Activated T-helper 1 cell treated with anti-CD3 and anti-CD28 coated beads, Interleukin-12 subunit alpha, Interleukin-12 subunit beta, Interleukin-2, Interleukin-4 antibody, amounts not matched to agents 30 ng/mL and 10 ng/mL and 1 ng/mL, durations not matched to agents 14 hours and 24 hours and 36 hours (primary cell): ENCODE measurements at regions of chr3 and their contacts with region 1.

Region 1: GRCh38 chr3:122101646-122102045 is 46.5 kb downstream of the CD86 start:
- DNase-seq: no peak
- H3K4me3 Mint-ChIP-seq: peak overlapping the region; percentile 47
- H3K27ac Mint-ChIP-seq: peak overlapping the region; percentile 87
- H3K4me1 Mint-ChIP-seq: no peaks in the 10 kb centered on the region
- H3K27me3 Mint-ChIP-seq: no peaks in the 10 kb centered on the region

Region 2: GRCh38 chr3:121660356-121661171 is 441.1 kb before region 1 on chr3 and contains the start of gene HCLS1:
- intact Hi-C with region 1: loop called (anchors 1 kb)
- DNase-seq: peak; percentile 73
- H3K4me3 Mint-ChIP-seq: peak within 1 kb of the TSS; percentile 95
- H3K27ac Mint-ChIP-seq: peak within 1 kb of the TSS; percentile 99
- H3K4me1 Mint-ChIP-seq: peaks cover 57% of the 10 kb centered on the region
- H3K27me3 Mint-ChIP-seq: no peaks in the 10 kb centered on the region
- total RNA-seq, gene HCLS1: 234 and 235 TPM in 2 replicates

Region 3: DNA sequence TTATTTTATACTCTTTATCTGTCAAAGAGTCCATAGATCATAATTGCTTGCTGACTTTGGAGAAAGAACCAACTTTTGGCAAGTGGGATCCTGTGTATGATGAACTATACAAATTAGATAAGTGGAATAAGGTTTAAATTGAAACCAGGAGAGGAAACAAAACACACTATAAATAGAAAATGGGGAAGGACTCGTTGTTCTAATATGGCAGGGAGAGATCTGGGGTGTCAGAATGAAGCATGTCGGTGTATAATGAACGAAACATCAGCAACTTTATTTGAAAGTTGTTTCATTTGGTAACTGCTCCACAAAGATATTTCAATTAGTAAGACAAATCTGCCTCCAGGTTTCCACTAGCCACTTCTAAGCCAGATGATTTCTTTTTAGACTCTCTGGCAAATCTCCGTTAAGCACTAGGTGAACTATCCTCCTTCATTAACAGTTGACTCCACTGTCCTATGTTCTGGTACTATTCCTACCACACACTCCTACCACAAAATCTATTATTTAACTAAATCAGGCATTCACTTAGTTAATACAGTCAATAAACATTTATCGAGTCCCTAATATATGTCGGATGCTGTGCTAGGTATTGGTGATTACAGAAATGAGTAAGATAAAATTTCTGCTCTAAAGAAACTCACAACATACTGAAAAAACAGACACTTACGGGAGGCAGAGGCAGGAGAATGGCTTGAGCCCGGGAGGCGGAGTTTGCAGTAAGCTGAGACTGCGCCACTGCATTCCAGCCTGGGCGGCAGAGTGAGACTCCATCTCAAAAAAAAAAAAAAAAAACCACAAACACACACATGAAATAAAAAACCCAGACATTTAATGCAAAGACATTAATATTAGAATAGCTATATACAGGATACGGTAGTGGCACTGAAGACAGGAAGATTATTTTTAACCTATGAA is 187.3 kb before region 1 on chr3:
- intact Hi-C with region 1: loop called (anchors 1 kb)
- DNase-seq: no peak
- H3K4me3 Mint-ChIP-seq: no peak overlapping the region
- H3K27ac Mint-ChIP-seq: no peak overlapping the region
- H3K4me1 Mint-ChIP-seq: peaks cover 13% of the 10 kb centered on the region
- H3K27me3 Mint-ChIP-seq: no peaks in the 10 kb centered on the region

Region 4: GRCh38 chr3:122067214-122067550 is 34.5 kb before region 1 on chr3:
- intact Hi-C with region 1: loop called (anchors 5 kb)
- DNase-seq: no peak
- H3K4me3 Mint-ChIP-seq: peak overlapping the region; percentile 1
- H3K27ac Mint-ChIP-seq: peak overlapping the region; percentile 53
- H3K4me1 Mint-ChIP-seq: peaks cover 13% of the 10 kb centered on the region
- H3K27me3 Mint-ChIP-seq: peaks cover 5% of the 10 kb centered on the region

Region 5: GRCh38 chr3:122183521-122183892 is 81.9 kb after region 1 on chr3 and contains the start of gene CASR:
- intact Hi-C with region 1: no loop called
- DNase-seq: no peak
- H3K4me3 Mint-ChIP-seq: peak within 1 kb of the TSS; percentile 52
- H3K27ac Mint-ChIP-seq: no peak within 1 kb of the TSS
- H3K4me1 Mint-ChIP-seq: peaks cover 8% of the 10 kb centered on the region
- H3K27me3 Mint-ChIP-seq: peaks cover 63% of the 10 kb centered on the region
- total RNA-seq, gene CASR: not detected in 2 replicates

Region 6: DNA sequence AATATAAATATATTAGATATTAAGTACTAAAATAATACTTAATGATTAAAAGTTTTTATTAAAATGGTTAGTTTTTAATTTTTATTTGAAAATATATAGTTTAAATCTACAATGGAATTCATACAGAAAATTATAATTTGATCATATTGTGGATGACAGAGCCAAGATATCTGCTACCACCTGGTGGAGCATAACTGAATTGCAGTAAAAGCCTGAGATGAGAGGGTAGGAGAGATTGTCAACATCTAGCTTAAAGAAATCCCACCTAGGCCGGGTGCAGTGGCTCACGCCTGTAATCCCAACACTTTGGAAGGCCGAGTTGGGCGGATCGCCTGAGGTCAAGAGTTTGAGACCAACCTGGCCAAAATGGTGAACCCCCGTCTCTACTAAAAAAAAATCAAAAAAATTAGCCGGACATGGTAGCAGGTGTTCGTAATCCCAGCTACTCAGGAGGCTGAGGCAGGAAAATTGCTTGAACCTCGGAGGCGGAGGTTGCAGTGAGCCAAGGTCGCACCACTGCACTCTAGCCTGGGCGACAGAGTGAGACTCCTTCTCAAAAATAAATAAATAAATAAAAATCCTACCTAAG is 198.3 kb after region 1 on chr3:
- intact Hi-C with region 1: loop called (anchors 1 kb)
- DNase-seq: no peak
- H3K4me3 Mint-ChIP-seq: no peak overlapping the region
- H3K27ac Mint-ChIP-seq: no peak overlapping the region
- H3K4me1 Mint-ChIP-seq: peaks cover 28% of the 10 kb centered on the region
- H3K27me3 Mint-ChIP-seq: no peaks in the 10 kb centered on the region

Region 7: GRCh38 chr3:122383771-122384697 is 282.4 kb after region 1 on chr3 and contains the start of gene FAM162A:
- intact Hi-C with region 1: loop called (anchors 1 kb)
- DNase-seq: peak; percentile 93
- H3K4me3 Mint-ChIP-seq: peak within 1 kb of the TSS; percentile 96
- H3K27ac Mint-ChIP-seq: peak within 1 kb of the TSS; percentile 90
- H3K4me1 Mint-ChIP-seq: peaks cover 81% of the 10 kb centered on the region
- H3K27me3 Mint-ChIP-seq: no peaks in the 10 kb centered on the region
- total RNA-seq, gene FAM162A: 63.7 and 70.0 TPM in 2 replicates

Region 8: DNA sequence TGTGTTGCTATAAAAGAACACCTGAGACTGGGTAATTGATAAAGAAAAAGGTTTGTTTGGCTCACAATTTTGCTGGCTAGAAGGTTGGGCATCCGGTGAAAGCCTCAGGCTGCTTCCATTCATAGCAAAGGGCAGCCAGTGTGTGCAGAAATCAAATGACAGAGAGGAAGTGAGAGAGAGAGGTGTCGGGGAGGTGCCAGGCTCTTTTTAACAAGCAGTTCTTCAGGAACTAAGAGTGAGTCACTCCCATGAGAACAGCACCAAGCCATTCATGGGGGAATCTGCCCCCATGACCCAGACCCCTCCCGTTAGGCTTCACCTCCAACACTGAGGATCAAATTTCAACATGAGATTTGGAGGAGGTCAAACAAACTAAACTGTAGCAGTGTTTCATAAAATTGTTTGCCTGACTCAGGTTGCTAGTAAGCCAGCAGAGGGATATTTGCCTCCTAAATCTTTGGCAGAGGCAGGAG is 471.3 kb after region 1 on chr3:
- intact Hi-C with region 1: no loop called
- DNase-seq: peak; percentile 9
- H3K4me3 Mint-ChIP-seq: peak overlapping the region; percentile 31
- H3K27ac Mint-ChIP-seq: peak overlapping the region; percentile 85
- H3K4me1 Mint-ChIP-seq: peaks cover 71% of the 10 kb centered on the region
- H3K27me3 Mint-ChIP-seq: no peaks in the 10 kb centered on the region

Region 9: DNA sequence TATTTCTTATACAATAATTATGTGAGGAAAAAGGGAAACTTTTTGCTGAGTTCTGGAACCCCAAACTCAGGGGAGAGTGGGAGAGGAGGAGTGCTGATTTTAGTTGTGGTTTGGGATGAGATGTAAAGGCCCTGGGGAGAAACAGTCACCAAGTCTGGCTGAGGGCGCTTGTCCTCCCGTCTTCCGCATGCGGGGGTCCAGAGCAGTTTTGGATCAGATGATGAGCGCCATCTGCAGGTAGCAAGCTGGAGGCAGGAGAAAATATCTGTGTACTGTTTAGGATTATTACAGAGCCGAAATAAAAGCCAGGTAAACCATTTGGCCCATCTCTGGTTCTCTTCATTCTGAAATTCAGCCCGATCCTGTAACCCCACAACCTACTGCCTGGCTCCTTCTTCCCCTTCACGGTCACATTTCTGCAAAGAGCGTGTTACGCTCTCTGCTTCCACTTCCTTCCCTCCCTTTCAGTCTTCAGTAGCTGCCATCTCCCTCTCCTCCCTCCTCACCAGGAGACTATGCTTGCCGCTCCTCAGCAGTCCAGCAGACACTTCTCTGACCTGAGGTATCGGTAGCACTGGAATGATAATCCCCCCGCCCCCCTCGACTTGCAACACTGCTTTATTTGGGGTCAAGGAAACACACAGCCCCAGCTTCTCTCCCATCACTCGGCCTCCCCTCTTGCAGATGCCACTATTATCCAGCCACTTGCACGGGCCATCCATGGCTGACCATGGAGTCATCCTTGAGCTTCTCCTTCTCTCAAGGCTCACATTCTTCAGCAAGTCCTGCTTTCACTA is 577.6 kb after region 1 on chr3:
- intact Hi-C with region 1: loop called (anchors 1 kb)
- DNase-seq: peak; percentile 77
- H3K4me3 Mint-ChIP-seq: peak overlapping the region; percentile 95
- H3K27ac Mint-ChIP-seq: peak overlapping the region; percentile 97
- H3K4me1 Mint-ChIP-seq: peaks cover 54% of the 10 kb centered on the region
- H3K27me3 Mint-ChIP-seq: no peaks in the 10 kb centered on the region